ENCODE measurements at regions of chr2 and their contacts with region 1.

Region 1: GRCh38 chr2:208595386-208596275 is 189.0 kb downstream of the PTH2R start:
- DNase-seq: peak; percentile 72 to 77
- H3K4me3 ChIP-seq: no peak overlapping the region
- H3K4me3 Mint-ChIP-seq: peak overlapping the region; percentile 65
- H3K27ac Mint-ChIP-seq: peak overlapping the region; percentile 92
- H3K4me1 ChIP-seq: peaks cover 22% of the 10 kb centered on the region
- H3K4me1 Mint-ChIP-seq: peaks cover 18% of the 10 kb centered on the region
- H3K27me3 ChIP-seq: no peaks in the 10 kb centered on the region
- H3K27me3 Mint-ChIP-seq: no peaks in the 10 kb centered on the region
- CTCF ChIP-seq: peak; percentile 32 to 51

Region 2: DNA sequence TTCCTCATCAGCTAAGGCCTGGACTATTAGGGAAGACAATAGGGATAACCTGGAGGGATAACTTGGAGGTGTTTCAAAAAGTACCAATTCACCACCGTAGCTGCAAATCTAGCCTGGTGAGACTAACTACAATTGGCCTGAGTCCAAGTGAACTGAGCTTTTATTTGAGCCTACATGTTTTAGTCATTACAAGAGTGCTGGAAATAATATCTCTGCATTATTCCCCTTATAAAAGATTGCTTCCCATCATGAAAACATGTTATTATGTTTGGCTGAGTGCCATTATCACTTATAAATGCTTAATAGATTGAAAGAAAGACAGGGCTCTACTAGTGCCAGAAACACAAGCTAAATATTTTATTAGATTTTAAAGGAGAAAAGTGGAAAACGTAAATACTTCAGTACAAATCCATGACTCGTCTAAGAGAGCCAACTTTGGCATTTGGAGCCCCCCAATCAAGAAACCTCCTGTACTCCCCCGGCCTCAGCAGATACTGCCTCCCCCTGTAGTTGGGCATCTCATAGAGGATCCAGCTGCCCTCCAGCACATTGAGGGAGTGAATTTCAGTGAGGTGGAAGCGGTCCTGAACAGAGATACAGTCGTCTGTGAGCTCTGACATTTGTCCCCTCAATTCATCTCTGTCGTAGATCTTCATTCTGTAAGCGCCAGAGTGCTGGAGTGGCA is 453.2 kb before region 1 on chr2:
- CTCF ChIA-PET with region 1: no interaction called
- POLR2A ChIA-PET with region 1: no interaction called
- intact Hi-C with region 1: no loop called
- DNase-seq: no peak
- H3K4me3 ChIP-seq: no peak overlapping the region
- H3K4me3 Mint-ChIP-seq: no peak overlapping the region
- H3K27ac Mint-ChIP-seq: no peak overlapping the region
- H3K4me1 ChIP-seq: peaks cover 6% of the 10 kb centered on the region
- H3K4me1 Mint-ChIP-seq: peaks cover 11% of the 10 kb centered on the region
- H3K27me3 ChIP-seq: no peaks in the 10 kb centered on the region
- H3K27me3 Mint-ChIP-seq: no peaks in the 10 kb centered on the region
- CTCF ChIP-seq: no peak

Region 3: DNA sequence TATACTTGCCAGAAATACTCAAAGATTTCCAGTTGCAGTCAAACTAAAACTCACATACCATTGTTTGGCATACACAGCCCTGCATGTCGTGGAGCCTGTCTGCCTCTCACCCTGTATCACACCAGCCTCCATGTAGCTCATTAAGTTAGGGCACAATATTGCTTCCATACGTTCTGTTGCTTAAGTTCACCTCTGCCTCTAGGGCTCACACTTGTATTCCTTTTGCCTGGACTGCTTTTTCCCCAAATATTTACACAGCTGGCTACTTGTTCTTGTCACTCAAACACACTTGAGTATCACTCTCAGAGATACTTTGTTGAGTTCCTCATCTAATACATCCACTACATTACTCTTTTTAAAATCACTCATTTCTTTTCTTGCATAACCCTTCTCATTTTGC is 105.9 kb before region 1 on chr2:
- CTCF ChIA-PET with region 1: interaction called, 3 read pairs
- POLR2A ChIA-PET with region 1: no interaction called
- intact Hi-C with region 1: loop called (anchors 5 kb)
- DNase-seq: peak in 1 of 2 experiments; percentile 49
- H3K4me3 ChIP-seq: no peak overlapping the region
- H3K4me3 Mint-ChIP-seq: peak overlapping the region; percentile 22
- H3K27ac Mint-ChIP-seq: peak overlapping the region; percentile 16
- H3K4me1 ChIP-seq: peaks cover 32% of the 10 kb centered on the region
- H3K4me1 Mint-ChIP-seq: peaks cover 36% of the 10 kb centered on the region
- H3K27me3 ChIP-seq: no peaks in the 10 kb centered on the region
- H3K27me3 Mint-ChIP-seq: no peaks in the 10 kb centered on the region
- CTCF ChIP-seq: peak in 1 of 2 experiments; percentile 34

Region 4: DNA sequence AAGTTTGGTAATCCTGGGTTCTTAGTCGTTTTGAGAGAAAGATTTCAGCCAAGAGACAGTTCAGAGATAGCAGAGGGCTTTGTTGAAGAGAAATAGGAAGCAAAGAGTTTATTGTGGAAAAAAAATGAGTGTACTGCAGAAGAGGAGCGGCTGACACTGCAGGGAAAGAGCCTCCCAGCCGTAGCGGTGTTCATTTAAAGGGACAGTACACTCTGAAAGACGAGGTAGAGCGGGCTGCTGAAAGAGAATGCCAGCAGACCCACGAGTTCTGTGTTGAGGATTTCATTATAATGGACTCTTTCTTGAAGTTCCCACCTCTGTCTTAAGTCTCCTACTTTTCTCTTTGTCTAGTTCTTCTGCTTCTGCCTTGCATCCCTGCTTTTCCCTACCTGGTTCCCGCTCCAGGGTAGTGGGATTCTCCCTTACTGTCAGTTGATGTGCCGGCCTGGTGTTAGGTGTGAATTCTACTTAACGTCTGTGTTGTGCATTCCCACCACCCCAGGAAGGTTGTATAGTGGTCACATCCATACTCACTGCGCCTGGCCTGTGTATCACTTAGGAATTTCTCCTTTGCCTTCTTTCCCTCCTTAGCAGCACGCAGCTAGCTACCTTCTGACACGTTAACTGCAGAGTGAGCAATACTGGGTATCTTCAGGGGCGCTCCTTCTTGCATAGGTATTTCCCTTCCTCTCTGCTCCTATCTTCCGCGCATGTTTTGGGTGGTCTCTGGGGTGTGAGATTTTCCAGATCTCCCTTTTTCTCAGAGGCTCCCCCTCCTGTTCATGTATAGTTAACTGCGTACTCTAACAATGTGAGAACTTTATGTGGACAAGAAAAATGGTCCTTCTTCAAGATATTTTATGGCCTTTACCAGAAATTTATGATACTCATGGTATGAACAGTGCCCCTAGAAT is 24.5 kb before region 1 on chr2:
- CTCF ChIA-PET with region 1: no interaction called
- POLR2A ChIA-PET with region 1: no interaction called
- intact Hi-C with region 1: no loop called
- DNase-seq: peak in 1 of 2 experiments; percentile 9
- H3K4me3 ChIP-seq: no peak overlapping the region
- H3K4me3 Mint-ChIP-seq: peak overlapping the region; percentile 38
- H3K27ac Mint-ChIP-seq: no peak overlapping the region
- H3K4me1 ChIP-seq: peaks cover 3% of the 10 kb centered on the region; the same call in 1 of the 2 replicates
- H3K4me1 Mint-ChIP-seq: peaks cover 18% of the 10 kb centered on the region
- H3K27me3 ChIP-seq: no peaks in the 10 kb centered on the region
- H3K27me3 Mint-ChIP-seq: no peaks in the 10 kb centered on the region
- CTCF ChIP-seq: peak; percentile 31 to 33

Region 5: GRCh38 chr2:208608127-208608806 is 12.6 kb after region 1 on chr2:
- CTCF ChIA-PET with region 1: no interaction called
- POLR2A ChIA-PET with region 1: no interaction called
- intact Hi-C with region 1: no loop called
- DNase-seq: no peak
- H3K4me3 ChIP-seq: no peak overlapping the region
- H3K4me3 Mint-ChIP-seq: no peak overlapping the region
- H3K27ac Mint-ChIP-seq: no peak overlapping the region
- H3K4me1 ChIP-seq: peaks cover 14% of the 10 kb centered on the region
- H3K4me1 Mint-ChIP-seq: no peaks in the 10 kb centered on the region
- H3K27me3 ChIP-seq: no peaks in the 10 kb centered on the region
- H3K27me3 Mint-ChIP-seq: no peaks in the 10 kb centered on the region
- CTCF ChIP-seq: no peak

Region 6: GRCh38 chr2:208638059-208638797 is 42.6 kb after region 1 on chr2:
- CTCF ChIA-PET with region 1: no interaction called
- POLR2A ChIA-PET with region 1: no interaction called
- intact Hi-C with region 1: loop called (anchors 1 kb)
- DNase-seq: peak; percentile 72 to 73
- H3K4me3 ChIP-seq: no peak overlapping the region
- H3K4me3 Mint-ChIP-seq: peak overlapping the region; percentile 34
- H3K27ac Mint-ChIP-seq: peak overlapping the region; percentile 58
- H3K4me1 ChIP-seq: peaks cover 14% of the 10 kb centered on the region
- H3K4me1 Mint-ChIP-seq: peaks cover 25% of the 10 kb centered on the region
- H3K27me3 ChIP-seq: no peaks in the 10 kb centered on the region
- H3K27me3 Mint-ChIP-seq: no peaks in the 10 kb centered on the region
- CTCF ChIP-seq: no peak

Region 7: DNA sequence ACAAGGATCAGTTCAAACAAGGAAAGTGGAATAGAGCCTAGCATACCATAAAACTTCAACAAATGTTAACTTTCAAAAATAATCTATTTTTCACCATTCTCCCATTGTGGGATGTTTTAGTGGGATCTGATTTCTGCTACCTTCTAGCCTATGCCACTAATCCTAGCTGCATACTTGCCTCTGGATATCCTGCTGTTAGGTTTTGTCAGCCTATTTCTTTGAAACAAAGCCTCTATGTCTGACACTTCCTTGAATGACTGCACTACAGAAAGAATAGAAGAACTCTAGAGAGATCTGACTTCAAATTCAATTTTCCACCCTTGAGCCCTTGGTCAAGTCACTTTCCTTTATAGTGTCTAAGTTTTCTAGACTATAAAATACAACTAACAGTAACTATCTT is 102.5 kb after region 1 on chr2:
- CTCF ChIA-PET with region 1: no interaction called
- POLR2A ChIA-PET with region 1: no interaction called
- intact Hi-C with region 1: no loop called
- DNase-seq: no peak
- H3K4me3 ChIP-seq: no peak overlapping the region
- H3K4me3 Mint-ChIP-seq: no peak overlapping the region
- H3K27ac Mint-ChIP-seq: no peak overlapping the region
- H3K4me1 ChIP-seq: no peaks in the 10 kb centered on the region
- H3K4me1 Mint-ChIP-seq: no peaks in the 10 kb centered on the region
- H3K27me3 ChIP-seq: no peaks in the 10 kb centered on the region
- H3K27me3 Mint-ChIP-seq: no peaks in the 10 kb centered on the region
- CTCF ChIP-seq: no peak